OCI-LY7 (cell line): ENCODE measurements at regions of chr1 and their contacts with region 1.

Region 1: GRCh38 chr1:10856863-10857598 is 60.6 kb upstream of the CASZ1 start:
- DNase-seq: no peak
- H3K4me3 ChIP-seq: no peak overlapping the region
- H3K27ac ChIP-seq: no peak overlapping the region
- H3K4me1 ChIP-seq: no peaks in the 10 kb centered on the region
- CTCF ChIP-seq: no peak

Region 2: DNA sequence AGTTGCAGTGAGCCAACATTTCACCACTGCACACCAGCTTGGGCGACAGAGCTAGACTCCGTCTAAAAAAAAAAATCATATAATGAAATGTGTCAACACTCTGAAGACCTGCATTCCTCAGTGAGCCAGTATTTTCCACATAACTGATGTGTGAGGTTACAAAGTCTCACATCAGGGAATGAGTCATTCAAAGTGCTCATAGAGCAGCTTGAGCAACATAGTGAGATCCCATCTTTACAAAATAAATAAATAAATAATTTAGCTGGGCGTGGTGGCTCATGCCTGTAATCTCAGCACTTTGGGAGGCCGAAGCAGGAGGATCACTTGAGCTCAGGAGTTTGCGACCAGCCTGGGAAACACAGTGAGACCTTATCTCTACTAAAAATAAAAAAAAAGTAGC is 126.0 kb before region 1 on chr1:
- CTCF ChIA-PET with region 1: no interaction called
- POLR2A ChIA-PET with region 1: no interaction called
- intact Hi-C with region 1: loop called (anchors 5 kb)
- DNase-seq: no peak
- H3K4me3 ChIP-seq: no peak overlapping the region
- H3K27ac ChIP-seq: no peak overlapping the region
- H3K4me1 ChIP-seq: no peaks in the 10 kb centered on the region
- CTCF ChIP-seq: no peak